PC-3 (cell line): ENCODE measurements at regions of chr9 and their contacts with region 1.

Region 1: DNA sequence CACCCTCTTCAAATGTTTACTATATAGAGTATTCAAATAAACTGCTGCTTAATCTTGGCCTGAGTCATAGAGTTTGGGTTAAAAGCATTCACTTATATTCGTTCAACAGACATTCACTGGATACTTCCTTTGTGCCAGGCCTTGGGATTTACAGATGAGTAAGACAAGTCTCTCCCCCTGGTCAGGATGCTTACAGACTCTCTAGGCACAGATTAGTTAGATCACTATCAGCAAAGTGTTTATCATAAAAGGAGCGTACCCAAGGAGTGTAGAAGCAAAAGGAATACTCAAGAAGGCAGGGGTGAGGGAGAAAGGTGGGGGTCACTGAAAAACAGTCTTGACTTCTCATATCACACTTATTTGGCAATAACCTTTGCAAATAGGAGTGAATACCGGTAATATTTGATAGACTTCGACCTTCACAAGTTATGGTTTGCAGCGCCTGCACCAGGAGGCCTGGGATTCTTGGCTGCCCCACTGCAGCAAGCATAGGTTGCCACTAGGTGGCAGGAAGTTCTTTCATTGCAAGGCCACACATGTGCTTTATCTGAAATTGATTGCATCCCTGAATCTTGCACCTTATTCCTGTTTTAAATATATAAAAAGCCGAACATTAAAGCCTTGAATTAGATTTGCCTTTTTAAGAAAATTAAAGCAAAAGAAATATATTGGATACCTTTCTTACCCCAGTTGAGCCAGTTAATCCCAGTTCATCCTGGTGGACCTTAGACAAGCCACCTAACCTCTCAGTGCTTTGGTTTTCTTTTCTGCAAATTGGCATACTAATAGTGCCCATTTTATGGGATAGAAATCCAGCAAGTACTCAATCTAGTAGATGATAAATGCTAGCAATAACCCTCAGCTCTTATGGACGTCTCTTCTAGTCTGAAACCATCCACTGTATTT is 6.5 kb upstream of the TRMT10B start:
- DNase-seq: peak; percentile 69
- ATAC-seq: peak; percentile 86
- H3K4me3 ChIP-seq: no peak overlapping the region
- H3K27ac ChIP-seq: peak overlapping the region; percentile 11; the same call in 1 of the 2 replicates
- H3K4me1 ChIP-seq: peaks cover 10% of the 10 kb centered on the region
- H3K27me3 ChIP-seq: no peaks in the 10 kb centered on the region
- CTCF ChIP-seq: peak; percentile 87

Region 2: GRCh38 chr9:37769995-37770394 is 22.9 kb after region 1 on chr9:
- CTCF ChIA-PET with region 1: interaction called, 10 read pairs
- POLR2A ChIA-PET with region 1: no interaction called
- intact Hi-C with region 1: no loop called
- DNase-seq: no peak
- ATAC-seq: no peak
- H3K4me3 ChIP-seq: no peak overlapping the region
- H3K27ac ChIP-seq: no peak overlapping the region
- H3K4me1 ChIP-seq: peaks cover 6% of the 10 kb centered on the region
- H3K27me3 ChIP-seq: no peaks in the 10 kb centered on the region
- CTCF ChIP-seq: no peak

Region 3: DNA sequence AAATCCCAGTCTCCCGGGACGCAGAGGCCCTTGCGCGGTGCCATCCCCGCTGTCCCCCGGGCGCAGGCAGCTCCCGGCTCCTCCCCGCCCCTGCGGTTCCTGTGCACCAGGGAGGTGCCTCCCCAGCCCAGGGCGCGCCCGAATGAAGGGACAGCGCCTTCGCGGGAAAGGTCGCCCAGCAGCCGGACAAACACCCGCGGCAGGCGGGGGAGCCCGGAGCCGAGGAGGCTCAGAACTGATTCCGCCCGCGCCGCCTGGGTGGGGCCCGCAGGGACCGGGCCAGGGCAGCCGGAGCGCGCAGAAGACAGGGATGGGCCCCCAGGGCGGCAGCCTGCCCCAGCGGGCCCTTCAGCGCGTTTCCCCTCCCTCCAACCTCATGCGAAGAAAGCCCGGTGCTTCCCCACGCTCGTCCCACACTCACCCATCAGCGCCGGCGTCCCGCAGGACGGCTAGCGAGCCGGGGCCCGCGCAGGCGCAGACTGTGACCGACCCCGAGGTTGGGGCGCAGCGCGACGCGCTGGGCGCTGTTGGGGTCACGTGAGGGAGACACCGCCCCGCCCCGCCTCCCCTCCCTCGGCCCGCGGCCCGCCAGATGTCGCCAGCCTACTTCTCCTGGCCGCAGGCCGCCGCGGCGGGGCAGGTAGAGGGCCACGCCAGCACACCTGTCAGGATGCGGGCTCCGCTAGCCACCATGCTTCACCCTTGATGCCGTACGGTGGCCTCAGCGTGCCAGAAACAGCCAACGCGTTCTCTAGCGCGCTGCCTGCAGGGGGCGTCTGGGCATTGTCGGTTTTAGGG is 156.7 kb after region 1 on chr9 and contains the start of gene SLC25A51:
- CTCF ChIA-PET with region 1: no interaction called
- POLR2A ChIA-PET with region 1: no interaction called
- intact Hi-C with region 1: loop called (anchors 1 kb)
- DNase-seq: peak; percentile 89
- ATAC-seq: peak; percentile 78
- H3K4me3 ChIP-seq: peak within 1 kb of the TSS; percentile 93
- H3K27ac ChIP-seq: peak within 1 kb of the TSS; percentile 71
- H3K4me1 ChIP-seq: peaks cover 19% of the 10 kb centered on the region
- H3K27me3 ChIP-seq: no peaks in the 10 kb centered on the region
- CTCF ChIP-seq: peak; percentile 85
- total RNA-seq, gene SLC25A51: 24.1 and 30.6 TPM in 2 replicates

Region 4: DNA sequence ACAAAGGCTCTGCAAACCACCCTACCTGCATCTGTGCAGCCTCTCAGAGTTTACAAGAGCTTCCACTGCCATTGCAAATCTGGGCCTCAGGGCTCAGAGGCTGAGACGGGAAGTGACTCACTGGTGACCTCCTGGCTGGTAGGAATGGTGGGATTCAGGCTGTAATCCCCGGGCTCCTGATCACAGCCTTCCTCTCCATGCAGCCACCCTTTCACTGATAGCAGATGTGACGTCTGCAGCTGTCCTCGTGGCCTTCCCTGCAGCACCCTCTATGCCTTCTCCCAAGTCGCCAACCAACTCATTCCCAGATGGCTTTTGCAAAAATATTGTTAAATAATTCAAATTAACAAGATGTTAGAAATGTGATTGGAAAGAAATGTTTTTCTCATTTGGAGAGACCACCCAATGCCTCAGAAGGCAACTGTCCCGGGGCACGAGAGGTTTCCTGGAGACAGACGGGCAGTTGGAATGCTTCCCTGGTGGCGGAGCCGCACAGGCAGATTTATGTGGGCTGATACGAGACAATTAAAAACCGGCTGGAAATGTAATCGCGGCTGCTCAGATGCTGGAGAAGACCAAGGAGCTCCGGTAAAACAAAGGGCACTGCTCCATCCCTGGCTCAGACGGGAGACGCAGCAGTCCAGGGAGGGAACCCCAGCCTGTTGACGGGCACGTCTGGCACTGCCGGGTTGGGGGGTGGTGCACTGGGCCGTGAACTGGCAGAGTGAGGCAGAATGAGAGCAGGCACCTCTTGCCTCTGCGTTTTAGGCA is 191.2 kb after region 1 on chr9:
- CTCF ChIA-PET with region 1: no interaction called
- POLR2A ChIA-PET with region 1: no interaction called
- intact Hi-C with region 1: no loop called
- DNase-seq: peak; percentile 80
- ATAC-seq: peak; percentile 93
- H3K4me3 ChIP-seq: no peak overlapping the region
- H3K27ac ChIP-seq: peak overlapping the region; percentile 92
- H3K4me1 ChIP-seq: peaks cover 38% of the 10 kb centered on the region
- H3K27me3 ChIP-seq: no peaks in the 10 kb centered on the region
- CTCF ChIP-seq: no peak

Region 5: GRCh38 chr9:38060681-38061080 is 313.6 kb after region 1 on chr9:
- CTCF ChIA-PET with region 1: interaction called, 12 read pairs
- POLR2A ChIA-PET with region 1: no interaction called
- intact Hi-C with region 1: no loop called
- DNase-seq: no peak
- ATAC-seq: no peak
- H3K4me3 ChIP-seq: no peak overlapping the region
- H3K27ac ChIP-seq: no peak overlapping the region
- H3K4me1 ChIP-seq: peaks cover 37% of the 10 kb centered on the region
- H3K27me3 ChIP-seq: no peaks in the 10 kb centered on the region
- CTCF ChIP-seq: no peak